Mammary epithelial cell (primary cell): ENCODE measurements at regions of chr9 and their contacts with region 1.

Region 1: GRCh38 chr9:84932915-84933527 is 263.5 kb downstream of the NTRK2 start:
- DNase-seq: peak; percentile 27
- H3K4me3 ChIP-seq: no peak overlapping the region
- H3K27ac ChIP-seq: no peak overlapping the region
- H3K4me1 ChIP-seq: no peaks in the 10 kb centered on the region
- H3K27me3 ChIP-seq: no peaks in the 10 kb centered on the region
- CTCF ChIP-seq: peak; percentile 32 to 59

Region 2: GRCh38 chr9:84804951-84805694 is 127.9 kb before region 1 on chr9:
- CTCF ChIA-PET with region 1: no interaction called
- dilution Hi-C with region 1: no loop called
- in situ Hi-C with region 1: no loop called
- intact Hi-C with region 1: no loop called
- DNase-seq: no peak
- H3K4me3 ChIP-seq: no peak overlapping the region
- H3K27ac ChIP-seq: no peak overlapping the region
- H3K4me1 ChIP-seq: no peaks in the 10 kb centered on the region
- H3K27me3 ChIP-seq: no peaks in the 10 kb centered on the region
- CTCF ChIP-seq: no peak

Region 3: GRCh38 chr9:85016384-85016997 is 83.5 kb after region 1 on chr9:
- CTCF ChIA-PET with region 1: no interaction called
- dilution Hi-C with region 1: loop called (anchors 5 kb)
- in situ Hi-C with region 1: no loop called
- intact Hi-C with region 1: no loop called
- DNase-seq: no peak
- H3K4me3 ChIP-seq: no peak overlapping the region
- H3K27ac ChIP-seq: no peak overlapping the region
- H3K4me1 ChIP-seq: peaks cover 14% of the 10 kb centered on the region
- H3K27me3 ChIP-seq: no peaks in the 10 kb centered on the region
- CTCF ChIP-seq: no peak

Region 4: DNA sequence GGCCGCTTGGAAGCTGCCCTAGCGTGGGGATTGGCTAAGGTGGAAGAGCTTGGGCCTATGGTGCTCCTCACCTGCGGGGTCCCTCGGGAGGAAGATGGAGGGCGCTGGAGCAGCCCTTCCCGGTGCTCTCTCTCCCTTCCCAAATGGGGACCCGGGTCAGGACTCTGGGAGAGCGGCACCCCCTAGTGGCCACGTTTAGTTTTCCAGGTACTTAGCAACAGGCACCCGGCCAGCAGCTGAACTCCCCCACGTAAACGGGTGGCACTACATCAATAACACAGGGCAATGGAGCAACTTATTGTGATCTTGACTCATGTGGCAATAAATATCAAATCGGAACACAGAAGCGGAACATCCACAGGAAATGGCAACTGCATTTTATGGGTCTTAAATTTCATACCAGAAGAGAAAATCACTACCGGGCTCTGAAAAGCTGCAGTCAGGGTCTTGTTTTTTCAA is 492.2 kb after region 1 on chr9:
- CTCF ChIA-PET with region 1: no interaction called
- dilution Hi-C with region 1: no loop called
- in situ Hi-C with region 1: no loop called
- intact Hi-C with region 1: loop called (anchors 1 kb)
- DNase-seq: peak; percentile 27
- H3K4me3 ChIP-seq: no peak overlapping the region
- H3K27ac ChIP-seq: no peak overlapping the region
- H3K4me1 ChIP-seq: no peaks in the 10 kb centered on the region
- H3K27me3 ChIP-seq: no peaks in the 10 kb centered on the region
- CTCF ChIP-seq: peak; percentile 62 to 79